Right cardiac atrium (tissue), 5 donors: ENCODE measurements at regions of chr14 and their contacts with region 1.

Region 1: GRCh38 chr14:21383848-21384493 is at the start of gene SUPT16H:
- DNase-seq: peak; percentile 97 to 99 (median 98)
- ATAC-seq: peak; percentile 99
- H3K4me3 ChIP-seq: peak within 1 kb of the TSS; percentile 94
- H3K27ac ChIP-seq: peak within 1 kb of the TSS; percentile 97
- H3K4me1 ChIP-seq: peaks cover 2% of the 10 kb centered on the region
- H3K27me3 ChIP-seq: no peaks in the 10 kb centered on the region
- total RNA-seq, gene SUPT16H: 33.7 to 38.7 (median 35.0) TPM

Region 2: DNA sequence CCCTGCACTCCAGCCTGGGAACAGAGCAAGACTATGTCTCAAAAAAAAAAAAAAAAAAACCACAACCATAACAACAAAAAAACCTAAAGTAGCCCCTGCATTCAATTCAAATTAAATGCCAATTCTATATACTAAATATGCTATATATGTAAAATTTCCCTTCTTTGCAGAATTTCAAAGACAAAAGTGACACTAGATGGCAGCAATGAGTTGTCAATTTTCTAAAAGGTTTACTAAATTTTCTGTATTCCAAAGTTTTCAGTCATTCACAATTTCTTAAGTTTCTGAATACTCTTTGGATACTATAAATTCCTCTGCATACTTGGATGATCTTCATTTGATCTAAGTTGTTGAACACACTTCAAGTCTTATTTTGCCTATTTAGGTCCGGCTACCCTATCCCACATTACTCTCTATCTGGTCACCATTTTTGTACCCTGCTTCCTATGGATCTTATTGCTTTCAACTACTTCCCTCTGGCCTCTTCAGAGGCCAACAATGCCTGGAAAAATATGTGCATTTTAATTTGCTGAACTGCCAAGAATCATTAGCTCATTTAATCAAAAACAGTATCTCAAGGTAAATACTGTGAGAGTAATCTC is 142.7 kb before region 1 on chr14:
- intact Hi-C with region 1: loop called in 1 of 4 experiments (anchors 10 kb)
- DNase-seq: no peak
- ATAC-seq: no peak
- H3K4me3 ChIP-seq: no peak overlapping the region
- H3K27ac ChIP-seq: peak overlapping the region; percentile 45
- H3K4me1 ChIP-seq: peaks cover 9% of the 10 kb centered on the region
- H3K27me3 ChIP-seq: no peaks in the 10 kb centered on the region